Endothelial cell of umbilical vein (primary cell): ENCODE measurements at regions of chr5 and their contacts with region 1.

Region 1: GRCh38 chr5:61805101-61805500 is 473.0 kb downstream of the ZSWIM6 start:
- DNase-seq: no peak
- H3K4me3 ChIP-seq: no peak overlapping the region
- H3K27ac ChIP-seq: no peak overlapping the region
- H3K4me1 ChIP-seq: no peaks in the 10 kb centered on the region
- H3K27me3 ChIP-seq: no peaks in the 10 kb centered on the region
- CTCF ChIP-seq: no peak
- POLR2A ChIP-seq: no peak

Region 2: GRCh38 chr5:61817472-61818326 is 12.6 kb after region 1 on chr5:
- CTCF ChIA-PET with region 1: interaction called, 11 read pairs
- POLR2A ChIA-PET with region 1: no interaction called
- dilution Hi-C with region 1: no loop called
- intact Hi-C with region 1: no loop called
- DNase-seq: peak; percentile 61
- H3K4me3 ChIP-seq: no peak overlapping the region
- H3K27ac ChIP-seq: no peak overlapping the region
- H3K4me1 ChIP-seq: no peaks in the 10 kb centered on the region
- H3K27me3 ChIP-seq: peaks cover 9 to 12% of the 10 kb centered on the region in 2 experiments
- CTCF ChIP-seq: peak; percentile 47 to 58
- POLR2A ChIP-seq: no peak

Region 3: GRCh38 chr5:61840361-61840760 is 35.3 kb after region 1 on chr5:
- CTCF ChIA-PET with region 1: no interaction called
- POLR2A ChIA-PET with region 1: no interaction called
- dilution Hi-C with region 1: no loop called
- intact Hi-C with region 1: no loop called
- DNase-seq: no peak
- H3K4me3 ChIP-seq: no peak overlapping the region
- H3K27ac ChIP-seq: no peak overlapping the region
- H3K4me1 ChIP-seq: no peaks in the 10 kb centered on the region
- H3K27me3 ChIP-seq: peaks cover 0 to 2% of the 10 kb centered on the region in 2 experiments
- CTCF ChIP-seq: no peak
- POLR2A ChIP-seq: no peak